Activated CD4-positive, alpha-beta T cell treated with anti-CD3 and anti-CD28 coated beads, Interleukin-2, amount 10 ng/mL, durations not matched to agents 7 days and 5 days (primary cell): ENCODE measurements at regions of chr11 and their contacts with region 1.

Region 1: DNA sequence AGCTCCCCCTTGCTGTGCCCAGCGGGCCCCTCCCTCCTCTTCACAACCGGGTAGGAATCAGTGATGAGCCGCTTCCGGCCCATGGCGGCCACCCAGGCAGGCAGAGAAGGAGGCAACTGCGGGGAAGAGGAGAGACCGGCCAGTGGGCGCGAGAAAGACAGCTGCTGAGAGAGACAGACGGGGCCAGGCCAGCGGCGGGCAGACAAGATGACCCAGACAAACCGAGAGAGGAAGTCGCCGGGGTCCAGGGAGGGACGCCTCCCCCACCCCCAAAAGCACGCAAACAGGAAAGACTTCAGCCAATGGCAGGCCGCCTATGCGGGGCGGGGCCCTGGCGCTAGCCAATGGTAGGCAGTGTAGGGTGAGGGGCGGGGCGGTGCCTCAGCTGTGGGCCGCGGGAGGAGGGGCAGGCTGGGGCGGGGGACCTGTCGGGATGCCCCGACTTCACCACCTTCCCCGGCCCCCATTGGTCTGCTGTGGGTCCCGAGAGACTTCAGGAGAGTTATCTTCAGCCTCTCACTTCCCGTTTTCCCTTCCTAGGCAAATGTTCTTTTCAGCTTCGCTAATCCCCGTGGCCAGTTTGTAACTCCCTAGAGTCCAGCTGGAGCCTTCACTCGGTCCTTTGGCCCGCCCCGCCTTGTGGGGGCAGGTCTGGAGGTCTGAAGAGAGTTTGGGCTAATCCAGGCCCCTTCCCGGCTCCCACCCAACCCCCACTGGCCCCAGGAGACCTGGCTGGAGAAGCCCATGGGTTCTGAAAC is at the start of gene POLD4:
- DNase-seq: peak; percentile 97
- H3K4me3 Mint-ChIP-seq: peak within 1 kb of the TSS; percentile 89
- H3K27ac Mint-ChIP-seq: peak within 1 kb of the TSS; percentile 99
- H3K4me1 Mint-ChIP-seq: peaks cover 36% of the 10 kb centered on the region
- H3K27me3 Mint-ChIP-seq: peaks cover 8% of the 10 kb centered on the region
- total RNA-seq, gene POLD4: 52.7 to 53.7 TPM

Region 2: GRCh38 chr11:67337257-67337656 is 16.2 kb before region 1 on chr11:
- CTCF ChIA-PET with region 1: interaction called, 11 read pairs
- POLR2A ChIA-PET with region 1: no interaction called
- DNase-seq: no peak
- H3K4me3 Mint-ChIP-seq: no peak overlapping the region
- H3K27ac Mint-ChIP-seq: no peak overlapping the region
- H3K4me1 Mint-ChIP-seq: peaks cover under 1% of the 10 kb centered on the region
- H3K27me3 Mint-ChIP-seq: no peaks in the 10 kb centered on the region

Region 3: DNA sequence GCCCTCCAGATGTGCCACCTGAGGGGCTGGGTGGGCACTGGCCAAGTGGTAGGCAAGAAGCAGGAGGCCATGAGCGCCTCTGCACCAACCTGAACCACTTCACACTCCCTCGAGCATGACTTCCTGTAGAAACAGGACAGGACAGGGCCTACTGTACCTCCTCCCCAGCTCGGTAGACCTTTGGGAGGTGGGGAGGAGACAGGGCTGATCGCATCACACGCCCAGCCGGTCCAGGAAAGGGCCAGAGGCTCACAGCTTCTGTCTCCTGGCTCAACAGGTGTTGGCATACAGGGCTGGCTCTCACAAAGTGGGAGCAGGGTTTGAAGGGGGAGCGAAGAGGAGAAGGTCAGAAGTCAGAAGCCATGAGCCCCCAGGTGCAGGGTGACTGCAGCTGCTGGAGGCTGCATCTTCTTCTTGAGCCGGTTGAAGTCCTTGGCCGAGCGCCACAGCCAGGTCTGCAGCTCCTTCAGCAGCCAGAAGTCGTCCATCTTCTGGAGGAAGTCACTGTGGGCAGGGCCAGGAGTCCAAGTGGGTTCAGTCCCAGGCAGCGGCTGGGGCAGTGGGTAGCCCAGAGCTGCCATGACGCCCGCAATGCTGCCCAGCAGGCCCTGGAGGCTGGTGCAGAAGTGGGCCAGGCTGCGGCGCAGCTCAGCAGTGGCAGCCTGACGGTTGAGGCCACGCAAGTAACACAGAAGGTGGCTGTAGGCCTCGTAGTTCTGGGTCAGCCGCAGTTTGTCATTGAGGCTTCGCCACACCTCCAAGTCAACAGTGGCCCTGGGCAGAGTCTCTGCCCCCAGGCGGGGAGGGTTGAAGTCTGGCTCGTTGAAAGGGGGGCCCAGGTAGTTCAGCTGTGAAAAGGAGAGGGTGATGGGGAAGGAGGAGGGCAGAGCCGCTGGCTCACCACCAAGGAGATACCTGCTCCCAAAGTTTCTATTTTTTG is 11.6 kb after region 1 on chr11:
- CTCF ChIA-PET with region 1: interaction called, 841 read pairs
- POLR2A ChIA-PET with region 1: no interaction called
- DNase-seq: no peak
- H3K4me3 Mint-ChIP-seq: no peak overlapping the region
- H3K27ac Mint-ChIP-seq: peak overlapping the region; percentile 60
- H3K4me1 Mint-ChIP-seq: peaks cover 36% of the 10 kb centered on the region
- H3K27me3 Mint-ChIP-seq: peaks cover 51% of the 10 kb centered on the region

Region 4: DNA sequence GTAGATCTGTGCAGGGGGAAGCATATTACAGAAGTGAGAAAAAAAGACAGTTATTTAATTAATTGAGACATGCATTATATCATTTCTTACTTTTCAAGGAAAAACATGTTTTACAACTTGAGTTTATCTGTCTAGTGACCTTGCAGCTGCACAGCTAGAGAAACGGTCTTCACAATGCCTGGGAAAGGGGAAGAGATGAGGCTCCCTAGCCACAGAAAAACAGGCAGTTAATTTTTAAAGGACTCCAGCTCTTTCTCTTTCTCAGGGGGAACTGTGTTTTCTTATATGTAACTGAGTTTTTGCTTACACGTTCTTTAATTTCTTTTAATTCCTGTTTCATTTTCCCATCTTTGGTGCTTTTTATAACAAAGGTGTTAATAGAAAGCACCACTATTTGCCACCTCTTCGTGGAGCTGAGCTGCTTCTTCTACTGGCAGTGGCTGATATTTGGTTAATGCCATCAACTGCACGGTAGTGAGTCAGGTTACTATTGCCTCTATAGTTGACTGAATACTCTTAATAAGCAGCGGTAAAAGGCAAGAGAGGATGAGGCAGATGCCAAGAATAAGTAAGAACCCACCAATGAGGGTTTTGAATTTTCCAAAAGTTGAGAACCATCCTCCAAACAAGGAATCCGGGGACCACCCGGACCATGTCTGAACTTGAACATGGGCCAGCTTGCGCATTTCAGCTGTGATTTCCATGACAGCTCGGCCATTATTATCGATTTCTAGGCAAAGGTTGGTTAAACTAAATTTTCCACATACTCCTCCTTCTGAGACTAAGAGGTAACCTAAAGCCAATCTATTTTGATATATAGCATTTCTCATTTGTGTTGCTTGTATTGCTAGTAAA is 332.4 kb after region 1 on chr11:
- CTCF ChIA-PET with region 1: no interaction called
- POLR2A ChIA-PET with region 1: no interaction called
- DNase-seq: no peak
- H3K4me3 Mint-ChIP-seq: no peak overlapping the region
- H3K27ac Mint-ChIP-seq: no peak overlapping the region
- H3K4me1 Mint-ChIP-seq: peaks cover 2% of the 10 kb centered on the region
- H3K27me3 Mint-ChIP-seq: peaks cover 26% of the 10 kb centered on the region